HepG2 (cell line): ENCODE measurements at regions of chr3 and their contacts with region 1.

Region 1: GRCh38 chr3:188954590-188955208 is 217.1 kb upstream of the TPRG1 start:
- DNase-seq: peak; percentile 68
- ATAC-seq: peak; percentile 92
- H3K4me3 ChIP-seq: no peak overlapping the region
- H3K27ac ChIP-seq: no peak overlapping the region
- H3K4me1 ChIP-seq: peaks cover 32% of the 10 kb centered on the region
- H3K27me3 ChIP-seq: no peaks in the 10 kb centered on the region
- CTCF ChIP-seq: peak; percentile 97
- EP300 ChIP-seq: no peak; a peak in 1 of 4 replicates
- POLR2A ChIP-seq: no peak
- RAD21 ChIP-seq: peak; percentile 94

Region 2: DNA sequence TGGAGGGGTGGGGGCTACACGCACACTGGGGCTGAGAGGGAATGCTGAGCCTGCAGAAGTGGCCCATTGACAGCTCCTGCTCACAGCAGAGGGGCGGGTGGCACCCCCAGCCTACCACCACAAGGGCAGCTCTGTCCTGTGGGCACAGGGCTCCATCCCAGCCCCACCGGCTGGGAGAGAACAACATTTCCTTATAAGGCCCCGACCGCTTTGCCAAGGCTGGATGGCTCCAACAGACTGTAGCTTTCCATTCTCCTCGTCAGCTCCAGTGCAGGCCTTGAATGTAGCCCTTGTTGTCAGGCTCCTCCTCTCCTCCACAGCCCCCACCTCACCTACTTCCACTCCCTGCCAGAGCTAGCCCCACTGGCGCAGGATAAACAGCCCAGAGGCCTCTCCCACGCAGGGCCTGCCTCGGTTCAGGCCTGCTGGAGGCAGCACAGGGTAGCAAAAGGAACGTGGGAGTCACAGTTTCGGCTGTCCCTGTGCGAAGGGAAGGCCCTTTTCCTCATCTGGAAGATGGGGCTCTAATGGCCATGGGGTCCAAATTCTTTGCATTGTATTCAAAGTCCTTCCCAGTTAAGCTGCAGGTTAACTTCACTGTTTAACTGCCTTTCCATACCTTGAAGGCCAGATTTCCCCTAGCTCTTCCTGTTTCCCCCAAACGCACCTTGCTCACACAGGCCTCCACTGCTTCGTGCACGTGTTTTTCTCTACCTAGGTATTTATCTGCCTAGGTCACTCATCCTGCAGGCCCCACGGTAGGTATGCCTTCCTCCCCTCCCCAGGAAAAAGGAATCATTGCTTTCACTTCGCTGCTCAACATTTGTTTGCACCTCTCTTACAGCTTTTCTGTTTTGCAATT is 902.3 kb before region 1 on chr3:
- CTCF ChIA-PET with region 1: no interaction called
- POLR2A ChIA-PET with region 1: no interaction called
- in situ Hi-C with region 1: loop called (anchors 10 kb)
- intact Hi-C with region 1: no loop called
- DNase-seq: peak; percentile 90
- ATAC-seq: peak; percentile 96
- H3K4me3 ChIP-seq: peak overlapping the region; percentile 10 to 51 (median 26); a peak in 4 of 6 replicates
- H3K27ac ChIP-seq: peak overlapping the region; percentile 72
- H3K4me1 ChIP-seq: peaks cover 76% of the 10 kb centered on the region
- H3K27me3 ChIP-seq: no peaks in the 10 kb centered on the region
- CTCF ChIP-seq: peak; percentile 86
- EP300 ChIP-seq: peak; percentile 62 to 71
- POLR2A ChIP-seq: peak; percentile 54 to 55; a peak in 2 of 4 replicates
- RAD21 ChIP-seq: peak; percentile 76

Region 3: DNA sequence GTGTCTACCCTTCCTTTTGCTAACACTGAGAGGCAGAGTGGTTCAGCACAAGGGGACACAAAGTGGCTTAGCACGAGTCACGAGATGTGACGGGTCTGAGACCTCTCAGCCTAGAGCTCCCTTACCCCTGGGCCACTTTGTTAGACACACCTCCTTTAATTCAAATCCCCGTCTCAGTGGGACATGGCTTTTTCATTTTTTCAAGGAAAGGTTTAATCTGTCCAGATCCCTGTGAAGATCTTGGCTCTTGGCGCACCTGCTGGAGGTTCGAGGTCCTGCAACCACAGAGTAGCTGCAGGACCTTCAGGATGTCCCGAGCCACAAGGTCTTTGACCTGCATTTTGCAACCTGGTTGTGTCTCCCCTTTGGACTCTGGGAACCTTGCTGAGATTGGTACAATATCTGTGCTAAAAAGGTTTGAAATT is 748.7 kb before region 1 on chr3:
- CTCF ChIA-PET with region 1: no interaction called
- POLR2A ChIA-PET with region 1: no interaction called
- in situ Hi-C with region 1: loop called (anchors 25 kb)
- intact Hi-C with region 1: no loop called
- DNase-seq: peak; percentile 81
- ATAC-seq: peak; percentile 93
- H3K4me3 ChIP-seq: no peak overlapping the region
- H3K27ac ChIP-seq: peak overlapping the region; percentile 50
- H3K4me1 ChIP-seq: peaks cover 30% of the 10 kb centered on the region
- H3K27me3 ChIP-seq: no peaks in the 10 kb centered on the region
- CTCF ChIP-seq: peak; percentile 66
- EP300 ChIP-seq: peak in 1 of 2 experiments; percentile 62; a peak in 2 of 4 replicates
- POLR2A ChIP-seq: no peak
- RAD21 ChIP-seq: peak; percentile 69

Region 4: GRCh38 chr3:188607805-188608315 is 346.8 kb before region 1 on chr3:
- CTCF ChIA-PET with region 1: no interaction called
- POLR2A ChIA-PET with region 1: no interaction called
- in situ Hi-C with region 1: no loop called
- intact Hi-C with region 1: loop called (anchors 10 kb)
- DNase-seq: no peak
- ATAC-seq: no peak
- H3K4me3 ChIP-seq: no peak overlapping the region
- H3K27ac ChIP-seq: no peak overlapping the region
- H3K4me1 ChIP-seq: no peaks in the 10 kb centered on the region
- H3K27me3 ChIP-seq: no peaks in the 10 kb centered on the region
- CTCF ChIP-seq: no peak
- EP300 ChIP-seq: no peak
- POLR2A ChIP-seq: no peak
- RAD21 ChIP-seq: no peak

Region 5: DNA sequence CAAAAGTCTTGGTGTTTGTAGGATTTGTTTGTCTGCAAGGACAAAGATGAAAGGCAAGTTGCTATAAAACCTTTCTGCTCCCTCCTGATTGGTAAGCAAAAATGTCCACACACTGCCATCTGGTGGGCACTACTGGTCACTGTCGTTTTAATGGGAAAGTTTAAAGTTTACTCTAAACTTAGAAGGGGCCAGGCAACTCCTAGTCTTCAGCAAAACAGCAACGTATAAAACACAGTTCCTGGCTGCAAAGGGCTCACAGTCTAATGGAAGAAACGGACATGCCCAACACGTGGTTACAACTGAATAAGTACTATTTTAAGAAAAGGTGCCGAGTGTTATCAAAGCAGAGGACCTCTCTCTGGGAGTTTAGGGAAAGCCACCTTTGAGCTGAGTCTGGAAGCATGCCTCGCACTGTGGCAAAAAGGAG is 193.4 kb after region 1 on chr3:
- CTCF ChIA-PET with region 1: interaction called, 4 read pairs
- POLR2A ChIA-PET with region 1: no interaction called
- in situ Hi-C with region 1: no loop called
- intact Hi-C with region 1: loop called (anchors 5 kb)
- DNase-seq: peak; percentile 52
- ATAC-seq: peak; percentile 94
- H3K4me3 ChIP-seq: no peak overlapping the region
- H3K27ac ChIP-seq: no peak overlapping the region
- H3K4me1 ChIP-seq: peaks cover 10% of the 10 kb centered on the region
- H3K27me3 ChIP-seq: no peaks in the 10 kb centered on the region; a peak in 2 of 5 replicates
- CTCF ChIP-seq: peak; percentile 84
- EP300 ChIP-seq: no peak
- POLR2A ChIP-seq: no peak
- RAD21 ChIP-seq: peak; percentile 25; the same call in 1 of the 2 replicates

Region 6: DNA sequence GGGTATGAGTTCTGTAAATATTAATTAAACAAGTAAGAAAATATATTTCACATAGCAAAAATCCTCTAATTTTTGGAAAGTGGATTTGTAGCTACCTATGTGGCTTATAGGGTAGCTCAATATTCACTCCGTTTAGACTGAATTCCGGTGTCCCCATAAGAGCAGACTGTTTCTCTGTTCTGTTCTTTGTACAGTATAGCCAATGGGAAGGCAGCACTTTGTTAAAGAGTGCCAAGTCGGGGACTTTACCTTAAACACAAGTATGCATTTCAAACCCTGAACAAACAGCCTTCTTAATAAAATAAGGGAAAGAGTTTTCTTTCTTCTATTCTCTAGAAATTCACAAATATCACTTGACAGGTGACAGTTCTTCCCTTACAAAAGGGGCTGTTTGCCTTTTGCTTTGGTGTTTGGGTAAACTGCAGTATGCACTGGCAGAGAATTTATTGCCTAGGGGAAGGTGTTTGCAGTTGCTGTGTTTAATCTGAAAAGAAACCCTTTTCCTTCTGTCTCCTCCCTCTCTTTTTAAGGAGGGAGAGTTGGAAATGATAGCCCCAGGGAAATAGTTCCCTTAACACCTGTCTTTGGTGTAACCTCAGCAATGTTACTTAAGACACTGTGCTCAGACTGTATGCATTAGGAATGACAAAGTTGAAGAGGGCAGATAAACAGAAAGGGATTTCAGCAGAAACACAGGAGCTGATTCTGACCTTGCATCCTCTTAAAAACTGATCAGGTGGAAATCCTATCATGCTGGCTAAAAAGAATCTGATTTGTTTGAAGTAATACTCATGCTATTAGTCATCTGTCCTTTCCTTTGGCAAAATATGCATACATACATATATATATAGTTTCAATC is 801.8 kb after region 1 on chr3:
- CTCF ChIA-PET with region 1: no interaction called
- POLR2A ChIA-PET with region 1: no interaction called
- in situ Hi-C with region 1: no loop called
- intact Hi-C with region 1: no loop called
- DNase-seq: no peak
- ATAC-seq: no peak
- H3K4me3 ChIP-seq: no peak overlapping the region
- H3K27ac ChIP-seq: no peak overlapping the region
- H3K4me1 ChIP-seq: no peaks in the 10 kb centered on the region
- H3K27me3 ChIP-seq: no peaks in the 10 kb centered on the region
- CTCF ChIP-seq: no peak
- EP300 ChIP-seq: no peak
- POLR2A ChIP-seq: no peak
- RAD21 ChIP-seq: no peak